Right cardiac atrium (tissue), 5 donors: ENCODE measurements at regions of chr18 and their contacts with region 1.

Region 1: GRCh38 chr18:80034068-80034851 is at the start of gene RBFA:
- DNase-seq: peak; percentile 100
- ATAC-seq: peak; percentile 96 to 97
- H3K4me3 ChIP-seq: peak within 1 kb of the TSS; percentile 70
- H3K27ac ChIP-seq: peak within 1 kb of the TSS; percentile 17
- H3K4me1 ChIP-seq: peaks cover 5% of the 10 kb centered on the region
- H3K27me3 ChIP-seq: no peaks in the 10 kb centered on the region
- total RNA-seq, gene RBFA: 10.3 to 15.2 (median 12.8) TPM

Region 2: GRCh38 chr18:79679111-79679872 is 355.0 kb before region 1 on chr18 and contains the start of gene CTDP1:
- intact Hi-C with region 1: loop called in 1 of 4 experiments (anchors 10 kb)
- DNase-seq: peak; percentile 99 to 100 (median 99)
- ATAC-seq: peak; percentile 99
- H3K4me3 ChIP-seq: peak within 1 kb of the TSS; percentile 69
- H3K27ac ChIP-seq: peak within 1 kb of the TSS; percentile 73
- H3K4me1 ChIP-seq: no peaks in the 10 kb centered on the region
- H3K27me3 ChIP-seq: no peaks in the 10 kb centered on the region
- total RNA-seq, gene CTDP1: 9.6 to 11.5 (median 10.1) TPM

Region 3: GRCh38 chr18:80009661-80010550 is 24.4 kb before region 1 on chr18:
- intact Hi-C with region 1: loop called in 1 of 4 experiments (anchors 2 kb)
- DNase-seq: peak; percentile 79 to 83 (median 80)
- ATAC-seq: peak; percentile 97
- H3K4me3 ChIP-seq: no peak overlapping the region
- H3K27ac ChIP-seq: peak overlapping the region; percentile 78
- H3K4me1 ChIP-seq: no peaks in the 10 kb centered on the region
- H3K27me3 ChIP-seq: no peaks in the 10 kb centered on the region